CD14-positive monocyte (primary cell): ENCODE measurements at regions of chr1 and their contacts with region 1.

Region 1: DNA sequence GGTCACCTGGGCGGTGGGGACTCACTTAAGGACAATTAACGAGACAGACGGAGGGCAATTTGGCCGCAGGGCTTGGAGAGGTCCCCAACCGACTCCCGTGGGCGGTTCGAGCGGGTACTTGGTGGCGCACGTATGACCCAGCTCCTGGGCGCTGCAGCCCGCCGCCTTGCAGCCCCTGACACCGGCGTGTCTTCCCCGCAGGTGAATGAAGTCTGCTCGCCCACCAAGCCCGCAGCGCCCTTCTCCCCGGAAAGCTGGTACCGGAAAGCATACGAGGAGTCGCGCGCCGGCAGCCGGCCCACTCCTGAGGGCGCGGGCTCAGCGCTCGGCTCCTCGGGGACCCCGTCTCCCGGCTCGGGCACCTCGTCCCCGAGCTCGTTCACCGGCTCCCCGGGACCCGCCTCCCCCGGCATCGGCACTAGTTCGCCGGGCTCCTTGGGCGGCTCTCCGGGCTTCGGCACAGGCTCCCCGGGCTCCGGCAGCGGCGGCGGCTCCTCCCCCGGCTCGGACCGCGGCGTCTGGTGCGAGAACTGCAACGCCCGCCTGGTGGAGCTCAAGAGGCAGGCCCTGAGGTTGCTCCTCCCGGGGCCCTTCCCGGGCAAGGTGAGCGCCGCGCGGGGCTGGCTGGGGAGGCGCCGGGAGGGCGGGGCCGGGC is 1.4 kb downstream of the KIF26B start:
- DNase-seq: peak; percentile 50 to 68 (median 61)
- H3K4me3 ChIP-seq: peak overlapping the region; percentile 37 to 73 (median 39)
- H3K4me3 Mint-ChIP-seq: peak overlapping the region; percentile 77 to 92
- H3K27ac ChIP-seq: no peak overlapping the region
- H3K27ac Mint-ChIP-seq: peak overlapping the region in 1 of 7 donors; percentile 28
- H3K4me1 ChIP-seq: peaks cover 34 to 44% of the 10 kb centered on the region in 2 donors
- H3K4me1 Mint-ChIP-seq: peaks cover 29% of the 10 kb centered on the region
- H3K27me3 ChIP-seq: peaks cover 76 to 89% of the 10 kb centered on the region in 2 donors
- H3K27me3 Mint-ChIP-seq: peaks cover 70 to 98% (median 70%) of the 10 kb centered on the region in 3 donors
- CTCF ChIP-seq: peak; percentile 81

Region 2: DNA sequence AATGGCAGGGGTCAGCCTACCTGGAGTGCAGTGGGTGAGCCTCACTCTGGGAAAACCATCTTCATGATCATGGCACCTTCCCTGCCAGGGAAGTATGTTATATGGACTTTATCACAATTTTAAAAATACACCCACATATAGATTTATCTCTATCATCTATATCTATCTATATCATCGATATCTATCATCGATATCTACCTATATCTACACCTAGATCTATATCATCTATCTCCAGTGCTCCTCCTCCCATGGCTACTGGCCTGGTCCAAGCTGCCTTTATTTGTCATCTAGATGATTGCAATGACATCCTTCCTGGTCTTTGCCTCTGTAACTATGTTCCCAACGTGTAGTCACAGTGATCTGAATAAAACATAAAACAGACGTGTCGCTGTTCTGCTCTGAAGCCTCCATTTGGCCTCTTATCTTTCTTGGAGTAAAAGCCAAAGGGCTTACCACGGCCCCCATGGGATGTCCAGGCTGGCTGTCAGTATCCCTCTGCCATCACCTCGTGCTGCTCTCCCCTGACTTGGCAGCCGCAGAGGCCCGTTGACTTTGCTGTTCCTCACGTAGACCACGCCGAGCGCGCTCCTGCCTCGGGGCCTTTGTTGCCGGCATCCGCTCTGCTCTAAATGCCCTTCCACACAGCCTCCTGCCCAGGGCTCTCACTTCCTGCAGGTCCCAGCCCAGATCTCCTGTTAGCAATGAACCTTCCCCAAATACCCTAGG is 22.1 kb before region 1 on chr1:
- intact Hi-C with region 1: no loop called
- DNase-seq: no peak
- H3K4me3 ChIP-seq: no peak overlapping the region
- H3K4me3 Mint-ChIP-seq: no peak overlapping the region
- H3K27ac ChIP-seq: no peak overlapping the region
- H3K27ac Mint-ChIP-seq: peak overlapping the region in 1 of 7 donors; percentile 65
- H3K4me1 ChIP-seq: no peaks in the 10 kb centered on the region
- H3K4me1 Mint-ChIP-seq: no peaks in the 10 kb centered on the region
- H3K27me3 ChIP-seq: peaks cover 2 to 4% of the 10 kb centered on the region in 2 donors
- H3K27me3 Mint-ChIP-seq: peaks cover 14 to 49% (median 20%) of the 10 kb centered on the region in 3 donors
- CTCF ChIP-seq: no peak

Region 3: GRCh38 chr1:246002725-246003441 is 846.7 kb after region 1 on chr1:
- intact Hi-C with region 1: loop called (anchors 2 kb)
- DNase-seq: peak; percentile 61 to 71 (median 67)
- H3K4me3 ChIP-seq: no peak overlapping the region
- H3K4me3 Mint-ChIP-seq: no peak overlapping the region
- H3K27ac ChIP-seq: no peak overlapping the region
- H3K27ac Mint-ChIP-seq: no peak overlapping the region
- H3K4me1 ChIP-seq: no peaks in the 10 kb centered on the region
- H3K4me1 Mint-ChIP-seq: peaks cover 11% of the 10 kb centered on the region
- H3K27me3 ChIP-seq: no peaks in the 10 kb centered on the region
- H3K27me3 Mint-ChIP-seq: peaks cover 4 to 5% (median 4%) of the 10 kb centered on the region in 3 donors
- CTCF ChIP-seq: peak; percentile 91